SK-N-SH (cell line): ENCODE measurements at regions of chr16 and their contacts with region 1.

Region 1: DNA sequence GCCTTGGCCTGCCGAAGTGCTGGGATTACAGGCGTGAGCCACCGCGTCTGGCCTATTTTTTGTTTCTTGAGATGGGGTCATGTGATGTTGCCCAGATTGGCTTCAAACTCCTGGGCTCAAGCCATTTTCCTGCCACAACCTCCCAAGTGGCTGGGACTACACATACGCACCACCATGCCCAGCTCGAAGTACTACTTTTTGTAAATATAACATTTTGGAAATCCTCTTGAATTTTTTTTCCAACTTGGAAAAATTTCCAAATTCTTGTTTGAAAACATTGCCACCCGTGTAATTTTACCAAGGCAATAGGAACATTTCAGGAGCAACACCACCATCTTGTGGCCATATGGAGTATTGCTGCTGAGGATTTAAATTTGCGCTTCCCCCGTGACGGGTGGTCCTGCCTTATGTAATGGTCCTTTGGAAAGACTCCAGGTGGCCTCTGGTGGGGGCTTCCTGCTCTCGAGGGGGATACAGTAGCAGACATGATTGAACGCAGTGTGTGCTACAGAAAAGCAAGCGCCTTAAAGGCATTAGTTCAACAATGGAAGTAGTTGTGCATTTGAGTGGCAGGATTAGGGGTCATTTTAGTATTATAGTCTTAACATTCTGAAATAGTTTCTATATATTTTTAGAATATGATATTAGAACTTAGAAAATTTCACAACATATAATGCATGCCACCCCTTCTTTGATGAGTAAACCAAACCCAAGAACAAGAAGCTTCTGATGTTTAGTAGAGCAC is 8.0 kb downstream of the FLYWCH1 start:
- DNase-seq: peak; percentile 84
- H3K4me3 ChIP-seq: peak overlapping the region in 1 of 2 experiments; percentile 38; a peak in 1 of 4 replicates
- H3K27ac ChIP-seq: peak overlapping the region in 1 of 2 experiments; percentile 46; a peak in 2 of 4 replicates
- H3K4me1 ChIP-seq: peaks cover 0 to 17% of the 10 kb centered on the region in 2 experiments; a peak in 3 of 4 replicates
- H3K27me3 ChIP-seq: no peaks in the 10 kb centered on the region
- CTCF ChIP-seq: peak; percentile 93
- EP300 ChIP-seq: no peak
- RAD21 ChIP-seq: peak; percentile 86

Region 2: DNA sequence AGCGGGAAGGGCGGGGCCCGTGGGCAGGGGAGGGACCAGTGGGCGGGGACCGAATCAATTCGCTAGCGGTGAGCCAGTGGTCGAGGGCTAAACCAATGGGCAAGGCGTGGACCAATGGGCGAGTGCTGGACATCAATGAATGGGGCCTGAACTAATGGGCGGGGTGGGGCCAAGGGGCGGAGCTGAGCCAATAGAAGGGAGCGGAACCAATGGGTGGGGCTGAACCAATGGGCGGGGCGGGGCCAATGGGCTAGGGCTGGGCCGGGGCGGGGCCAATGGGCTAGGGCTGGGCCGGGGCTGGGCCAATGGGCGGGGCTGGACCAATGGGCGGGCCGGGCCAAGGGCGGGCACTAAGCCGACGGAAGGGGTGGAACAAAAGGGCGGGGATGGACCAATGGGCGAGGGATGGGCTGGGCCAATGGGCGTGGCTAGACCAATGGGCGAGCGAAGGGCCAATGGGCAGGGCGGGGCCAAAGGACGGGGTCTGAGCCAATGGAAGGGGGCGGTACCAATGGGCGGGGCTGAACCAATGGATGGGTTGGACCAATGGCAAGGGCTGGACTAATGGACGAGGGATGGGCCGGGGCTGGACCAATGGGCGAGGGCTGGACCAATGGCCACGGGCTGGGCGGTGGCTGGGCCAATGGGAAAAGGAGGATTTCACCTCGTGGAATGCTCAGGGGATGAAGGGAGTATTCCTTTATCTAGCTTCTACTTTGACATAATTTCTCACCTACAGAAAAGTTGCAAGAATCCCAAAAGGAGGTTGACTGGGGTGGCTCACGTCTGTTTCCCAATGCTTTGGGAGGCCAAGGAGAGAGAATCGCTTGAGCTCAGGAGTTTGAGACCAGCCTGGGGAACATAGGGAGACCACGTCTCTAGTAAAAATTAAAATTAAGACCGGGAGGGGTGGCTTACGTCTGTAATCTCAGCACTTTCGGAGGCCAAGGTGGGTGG is 14.0 kb before region 1 on chr16:
- CTCF ChIA-PET with region 1: interaction called, 10 read pairs
- POLR2A ChIA-PET with region 1: interaction called, 3 read pairs
- DNase-seq: peak; percentile 95
- H3K4me3 ChIP-seq: peak overlapping the region; percentile 73 to 95; a peak in 3 of 4 replicates
- H3K27ac ChIP-seq: peak overlapping the region in 1 of 2 experiments; percentile 72; a peak in 2 of 4 replicates
- H3K4me1 ChIP-seq: peaks cover 6 to 8% of the 10 kb centered on the region in 2 experiments; a peak in 2 of 4 replicates
- H3K27me3 ChIP-seq: no peaks in the 10 kb centered on the region
- CTCF ChIP-seq: no peak
- EP300 ChIP-seq: no peak
- RAD21 ChIP-seq: no peak

Region 3: GRCh38 chr16:2955779-2956578 is 36.3 kb after region 1 on chr16:
- CTCF ChIA-PET with region 1: interaction called, 10 read pairs
- POLR2A ChIA-PET with region 1: no interaction called
- DNase-seq: no peak
- H3K4me3 ChIP-seq: no peak overlapping the region
- H3K27ac ChIP-seq: no peak overlapping the region
- H3K4me1 ChIP-seq: no peaks in the 10 kb centered on the region
- H3K27me3 ChIP-seq: peaks cover 23% of the 10 kb centered on the region
- CTCF ChIP-seq: no peak
- EP300 ChIP-seq: no peak
- RAD21 ChIP-seq: no peak